ENCODE measurements at regions of chr3 and their contacts with region 1.

Region 1: DNA sequence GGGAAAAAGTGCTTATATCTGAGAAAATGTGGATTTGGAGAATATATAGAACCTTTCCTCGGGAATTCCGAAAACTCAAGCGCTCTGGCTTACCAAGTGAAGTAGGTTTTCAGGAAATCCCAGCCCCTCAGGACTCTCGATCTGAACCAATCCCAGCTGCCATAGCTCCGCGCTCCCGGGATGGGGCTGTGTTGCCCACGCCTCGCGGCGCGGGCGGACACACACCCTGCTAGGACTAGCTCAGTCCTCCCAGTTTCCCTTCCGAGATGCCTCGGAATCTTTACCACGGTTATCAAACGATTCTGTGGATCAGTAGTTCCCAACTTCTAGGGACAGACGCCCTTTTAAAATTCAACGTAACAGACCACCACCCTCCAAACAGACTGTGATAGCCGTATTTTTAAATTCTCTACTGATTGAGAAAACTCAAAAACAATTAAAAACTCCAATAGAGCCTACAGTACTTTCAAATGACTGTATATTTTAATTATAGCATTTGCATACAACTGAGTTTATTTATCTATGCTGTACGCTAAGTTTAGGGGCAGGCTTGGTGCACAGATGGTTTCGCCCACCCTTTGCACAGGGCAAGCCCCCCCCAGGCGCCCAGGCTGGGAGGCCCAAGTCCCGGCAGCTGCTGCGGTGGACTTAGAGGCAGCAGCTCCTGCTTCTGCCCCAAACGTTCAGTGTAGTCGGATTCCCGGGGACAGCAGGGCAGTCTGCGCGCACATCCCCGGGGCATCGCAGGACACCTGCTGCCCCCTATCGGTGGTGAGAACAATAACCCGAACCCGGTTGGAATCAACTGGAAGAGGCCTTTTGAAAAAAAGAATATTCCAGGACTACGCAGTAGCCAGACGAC is 52.3 kb downstream of the CCDC54 start:
- DNase-seq: peak; percentile 62
- ATAC-seq: peak; percentile 70
- H3K4me3 Mint-ChIP-seq: peak overlapping the region; percentile 73
- H3K27ac Mint-ChIP-seq: no peak overlapping the region
- H3K4me1 Mint-ChIP-seq: peaks cover 20% of the 10 kb centered on the region
- H3K27me3 Mint-ChIP-seq: peaks cover 14% of the 10 kb centered on the region
- CTCF ChIP-seq: peak; percentile 82

Region 2: GRCh38 chr3:107235928-107236315 is 193.6 kb before region 1 on chr3:
- CTCF ChIA-PET with region 1: interaction called, 37 read pairs
- POLR2A ChIA-PET with region 1: interaction called, 3 read pairs
- intact Hi-C with region 1: no loop called
- DNase-seq: peak; percentile 52
- ATAC-seq: peak; percentile 71
- H3K4me3 Mint-ChIP-seq: peak overlapping the region; percentile 60
- H3K27ac Mint-ChIP-seq: no peak overlapping the region
- H3K4me1 Mint-ChIP-seq: peaks cover 13% of the 10 kb centered on the region
- H3K27me3 Mint-ChIP-seq: peaks cover 2% of the 10 kb centered on the region
- CTCF ChIP-seq: peak; percentile 94

Region 3: GRCh38 chr3:107249132-107249531 is 180.4 kb before region 1 on chr3:
- CTCF ChIA-PET with region 1: interaction called, 14 read pairs
- POLR2A ChIA-PET with region 1: no interaction called
- intact Hi-C with region 1: no loop called
- DNase-seq: no peak
- ATAC-seq: no peak
- H3K4me3 Mint-ChIP-seq: no peak overlapping the region
- H3K27ac Mint-ChIP-seq: no peak overlapping the region
- H3K4me1 Mint-ChIP-seq: no peaks in the 10 kb centered on the region
- H3K27me3 Mint-ChIP-seq: no peaks in the 10 kb centered on the region
- CTCF ChIP-seq: no peak

Region 4: DNA sequence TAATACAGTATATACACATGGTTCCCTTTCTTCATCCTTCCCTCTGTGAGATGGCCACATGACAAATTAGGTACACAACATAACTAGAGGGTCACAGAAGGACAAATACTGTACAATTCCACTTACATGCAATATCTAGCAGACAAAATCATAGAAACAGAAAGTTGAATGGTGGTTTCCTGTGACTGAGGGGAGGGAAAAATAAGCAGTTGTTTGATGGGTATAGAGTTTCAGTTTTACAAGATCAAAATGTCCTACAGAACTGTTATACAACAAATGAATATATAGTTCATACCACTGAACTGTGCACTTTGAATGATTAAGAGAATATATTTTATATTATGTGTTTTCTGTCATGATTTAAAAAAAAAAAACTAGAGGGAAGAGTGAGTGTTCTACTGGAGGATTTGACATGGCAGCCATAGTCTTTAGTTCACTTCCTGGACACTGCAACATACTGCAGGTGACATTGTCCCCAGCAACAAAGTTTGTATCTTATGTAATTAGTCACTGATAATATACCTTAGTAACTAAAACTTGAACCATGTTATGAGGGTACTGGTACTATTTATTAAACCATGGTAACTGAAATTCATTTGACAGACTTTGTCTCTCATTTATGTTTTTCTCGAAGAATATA is 15.1 kb before region 1 on chr3:
- CTCF ChIA-PET with region 1: interaction called, 43 read pairs
- POLR2A ChIA-PET with region 1: no interaction called
- intact Hi-C with region 1: no loop called
- DNase-seq: no peak
- ATAC-seq: peak; percentile 91
- H3K4me3 Mint-ChIP-seq: no peak overlapping the region
- H3K27ac Mint-ChIP-seq: no peak overlapping the region
- H3K4me1 Mint-ChIP-seq: peaks cover 11% of the 10 kb centered on the region
- H3K27me3 Mint-ChIP-seq: peaks cover 2% of the 10 kb centered on the region
- CTCF ChIP-seq: no peak

Region 5: GRCh38 chr3:107456501-107456900 is 26.9 kb after region 1 on chr3:
- CTCF ChIA-PET with region 1: interaction called, 10 read pairs
- POLR2A ChIA-PET with region 1: interaction called, 3 read pairs
- intact Hi-C with region 1: no loop called
- DNase-seq: no peak
- ATAC-seq: no peak
- H3K4me3 Mint-ChIP-seq: no peak overlapping the region
- H3K27ac Mint-ChIP-seq: no peak overlapping the region
- H3K4me1 Mint-ChIP-seq: peaks cover 11% of the 10 kb centered on the region
- H3K27me3 Mint-ChIP-seq: no peaks in the 10 kb centered on the region
- CTCF ChIP-seq: no peak

Region 6: DNA sequence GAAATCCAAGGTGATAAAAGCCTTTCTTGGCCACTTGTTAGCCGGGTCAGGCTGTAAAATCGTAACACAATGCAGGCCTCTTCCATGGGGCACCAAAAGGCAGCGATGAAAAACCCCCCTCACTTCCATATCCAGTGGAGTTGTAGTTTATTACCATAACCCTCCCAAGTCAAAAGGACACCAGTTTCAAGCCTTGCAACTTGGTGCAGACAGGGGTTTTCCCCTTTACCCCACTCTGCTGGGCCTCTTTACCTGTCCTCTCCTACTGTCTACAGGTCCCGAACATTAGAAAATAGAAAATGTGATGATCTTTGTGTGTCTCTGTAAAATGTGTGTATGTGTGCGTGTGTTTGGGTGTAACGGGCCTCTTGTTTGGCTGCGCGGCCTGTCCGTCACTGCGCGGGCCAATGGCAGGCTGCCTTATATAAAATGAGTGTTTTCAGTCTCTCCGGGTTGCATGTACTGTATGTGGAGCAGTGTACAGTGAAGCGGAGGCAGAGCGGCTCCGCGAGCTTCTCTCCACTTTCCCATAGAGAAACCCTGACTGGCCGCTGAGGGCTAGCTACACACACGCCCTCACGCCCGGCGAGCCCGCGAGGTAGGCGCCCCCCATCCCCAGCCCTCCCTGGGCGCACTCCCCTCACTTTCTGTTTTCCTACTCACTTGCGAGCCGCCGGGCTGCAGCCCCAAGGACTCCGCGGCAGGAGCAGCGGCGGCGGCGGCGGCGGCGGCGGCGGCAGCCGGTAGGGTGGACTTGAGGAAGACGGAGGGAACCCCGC is 93.1 kb after region 1 on chr3 and contains the start of gene BBX:
- CTCF ChIA-PET with region 1: interaction called, 6 read pairs
- POLR2A ChIA-PET with region 1: interaction called, 5 read pairs
- intact Hi-C with region 1: loop called (anchors 5 kb)
- DNase-seq: peak; percentile 94
- ATAC-seq: peak; percentile 93
- H3K4me3 Mint-ChIP-seq: peak within 1 kb of the TSS; percentile 92
- H3K27ac Mint-ChIP-seq: peak within 1 kb of the TSS; percentile 95
- H3K4me1 Mint-ChIP-seq: peaks cover 27% of the 10 kb centered on the region
- H3K27me3 Mint-ChIP-seq: no peaks in the 10 kb centered on the region
- CTCF ChIP-seq: no peak
- total RNA-seq, gene BBX: 40.9 to 42.4 TPM

Region 7: GRCh38 chr3:107589454-107589853 is 159.9 kb after region 1 on chr3:
- CTCF ChIA-PET with region 1: no interaction called
- POLR2A ChIA-PET with region 1: no interaction called
- intact Hi-C with region 1: no loop called
- DNase-seq: no peak
- ATAC-seq: peak; percentile 58
- H3K4me3 Mint-ChIP-seq: no peak overlapping the region
- H3K27ac Mint-ChIP-seq: peak overlapping the region; percentile 0
- H3K4me1 Mint-ChIP-seq: peaks cover 23% of the 10 kb centered on the region
- H3K27me3 Mint-ChIP-seq: no peaks in the 10 kb centered on the region
- CTCF ChIP-seq: no peak

Region 8: GRCh38 chr3:108036984-108037741 is 607.6 kb after region 1 on chr3:
- CTCF ChIA-PET with region 1: no interaction called
- POLR2A ChIA-PET with region 1: no interaction called
- intact Hi-C with region 1: no loop called
- DNase-seq: no peak
- ATAC-seq: no peak
- H3K4me3 Mint-ChIP-seq: no peak overlapping the region
- H3K27ac Mint-ChIP-seq: no peak overlapping the region
- H3K4me1 Mint-ChIP-seq: peaks cover 11% of the 10 kb centered on the region
- H3K27me3 Mint-ChIP-seq: no peaks in the 10 kb centered on the region
- CTCF ChIP-seq: no peak